Heart right ventricle (tissue), 16 donors: ENCODE measurements at regions of chr7 and their contacts with region 1.

Region 1: GRCh38 chr7:149090397-149091195 is at the start of gene ZNF786:
- DNase-seq: peak; percentile 90 to 92
- ATAC-seq: peak; percentile 96 to 99 (median 98)
- H3K4me3 ChIP-seq: peak within 1 kb of the TSS; percentile 57 to 99 (median 85)
- H3K27ac ChIP-seq: peak within 1 kb of the TSS; percentile 96 to 100 (median 98)
- H3K4me1 ChIP-seq: peaks cover 0 to 39% (median 14%) of the 10 kb centered on the region in 9 donors
- H3K27me3 ChIP-seq: no peaks in the 10 kb centered on the region
- CTCF ChIP-seq: peak; percentile 88 to 98 (median 96)
- total RNA-seq, gene ZNF786: 2.0 to 3.4 (median 2.6) TPM

Region 2: DNA sequence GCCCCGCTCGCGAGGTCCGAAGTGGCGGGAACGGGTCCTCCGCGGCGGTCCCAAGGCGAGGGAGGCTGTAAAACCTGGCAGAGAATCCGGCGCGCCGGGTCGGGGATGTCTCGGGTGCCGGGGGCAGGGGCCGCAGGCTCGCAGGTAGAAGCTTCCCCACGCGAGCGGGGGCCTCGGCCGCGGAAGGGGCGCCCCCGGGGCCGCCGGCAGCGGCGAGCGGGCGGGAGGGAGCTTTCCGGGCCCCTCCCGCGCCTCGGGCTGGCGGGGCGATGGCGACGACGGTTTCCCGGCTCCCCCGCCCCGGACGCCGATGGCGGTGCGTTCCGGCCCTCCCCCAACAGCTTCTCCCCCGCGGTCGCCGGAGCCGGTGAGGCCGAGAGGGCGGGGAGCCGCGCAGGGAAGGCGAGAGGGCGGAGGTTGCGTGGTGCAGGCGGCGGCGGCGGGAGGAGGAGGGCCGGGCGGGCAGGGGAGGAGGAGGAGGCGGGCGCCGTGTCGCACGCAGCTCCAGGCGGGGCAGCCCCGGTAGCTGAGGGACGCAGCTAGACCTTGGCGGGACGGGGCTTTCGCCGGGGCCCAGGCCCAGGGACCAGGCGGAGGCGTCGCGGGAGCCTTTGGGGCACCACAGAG is 392.1 kb before region 1 on chr7 and contains the start of gene CUL1:
- intact Hi-C with region 1: loop called in 1 of 10 experiments (anchors 5 kb)
- DNase-seq: peak; percentile 89 to 92
- ATAC-seq: peak; percentile 86 to 94 (median 90)
- H3K4me3 ChIP-seq: peak within 1 kb of the TSS; percentile 50 to 97 (median 93)
- H3K27ac ChIP-seq: peak within 1 kb of the TSS; percentile 89 to 100 (median 96)
- H3K4me1 ChIP-seq: peaks cover 10 to 53% (median 45%) of the 10 kb centered on the region in 9 donors
- H3K27me3 ChIP-seq: no peaks in the 10 kb centered on the region
- CTCF ChIP-seq: no peak
- total RNA-seq, gene CUL1: 40.6 to 53.4 (median 45.0) TPM

Region 3: GRCh38 chr7:148884299-148885022 is 206.1 kb before region 1 on chr7:
- intact Hi-C with region 1: loop called in 1 of 10 experiments (anchors 5 kb)
- DNase-seq: peak; percentile 93 to 94
- ATAC-seq: peak; percentile 99 to 100 (median 100)
- H3K4me3 ChIP-seq: peak overlapping the region; percentile 50 to 97 (median 94)
- H3K27ac ChIP-seq: peak overlapping the region; percentile 73 to 96 (median 93)
- H3K4me1 ChIP-seq: peaks cover 0 to 19% (median 8%) of the 10 kb centered on the region in 9 donors
- H3K27me3 ChIP-seq: no peaks in the 10 kb centered on the region
- CTCF ChIP-seq: peak in 1 of 9 donors; percentile 20

Region 4: GRCh38 chr7:148927123-148928045 is 163.2 kb before region 1 on chr7:
- intact Hi-C with region 1: no loop called
- DNase-seq: no peak
- ATAC-seq: no peak
- H3K4me3 ChIP-seq: no peak overlapping the region
- H3K27ac ChIP-seq: no peak overlapping the region
- H3K4me1 ChIP-seq: no peaks in the 10 kb centered on the region
- H3K27me3 ChIP-seq: no peaks in the 10 kb centered on the region
- CTCF ChIP-seq: no peak

Region 5: GRCh38 chr7:149005241-149006050 is 85.2 kb before region 1 on chr7:
- intact Hi-C with region 1: loop called in 9 of 10 experiments (anchors 1 to 5 kb)
- DNase-seq: peak; percentile 85
- ATAC-seq: peak; percentile 77 to 94 (median 82)
- H3K4me3 ChIP-seq: no peak overlapping the region
- H3K27ac ChIP-seq: no peak overlapping the region
- H3K4me1 ChIP-seq: peaks cover 0 to 4% (median 0%) of the 10 kb centered on the region in 9 donors
- H3K27me3 ChIP-seq: no peaks in the 10 kb centered on the region
- CTCF ChIP-seq: peak; percentile 82 to 95 (median 89)

Region 6: DNA sequence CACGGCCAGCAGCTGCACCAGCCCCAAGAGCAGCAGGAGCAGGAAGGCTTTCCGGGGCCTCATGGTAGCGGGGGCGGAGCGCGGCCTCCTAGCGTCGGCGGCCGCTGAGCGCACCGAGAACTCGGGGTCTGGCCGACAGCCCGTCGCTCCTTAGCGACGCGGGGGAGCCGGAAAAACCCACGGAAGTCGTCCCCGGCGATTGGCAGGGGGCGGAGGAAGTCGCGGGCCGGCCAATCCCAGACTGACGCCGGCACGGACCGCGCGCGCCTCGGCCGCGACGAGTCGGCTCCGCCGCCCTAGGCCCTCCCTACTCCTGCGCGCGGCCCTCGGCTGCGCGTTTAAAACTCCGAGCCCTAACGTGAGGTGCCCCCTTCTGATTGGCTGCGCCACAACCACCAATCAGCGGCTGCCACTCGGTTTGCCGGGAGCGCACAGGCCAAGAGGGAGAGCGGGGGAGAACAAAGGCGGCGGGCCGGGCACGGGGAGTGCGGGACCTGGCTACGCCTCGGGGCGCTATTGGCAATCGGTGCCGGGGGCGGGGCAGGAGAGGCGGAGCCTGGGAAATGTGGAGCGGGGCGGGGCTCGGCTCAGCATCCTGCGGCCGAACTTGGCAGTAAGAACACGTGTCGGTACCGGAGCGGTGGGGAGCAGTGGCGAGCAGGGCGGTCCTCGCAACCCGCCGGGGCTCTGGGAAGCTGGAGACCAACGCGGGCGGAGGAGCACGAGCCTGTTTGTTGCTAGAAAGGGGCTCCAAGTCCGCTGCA is 62.1 kb before region 1 on chr7 and contains the start of gene PDIA4:
- intact Hi-C with region 1: loop called in 3 of 10 experiments (anchors 1 kb)
- DNase-seq: peak; percentile 99 to 100
- ATAC-seq: peak; percentile 95 to 99 (median 98)
- H3K4me3 ChIP-seq: peak within 1 kb of the TSS; percentile 63 to 92 (median 84)
- H3K27ac ChIP-seq: peak within 1 kb of the TSS; percentile 44 to 95 (median 88)
- H3K4me1 ChIP-seq: peaks cover 0 to 35% (median 22%) of the 10 kb centered on the region in 9 donors
- H3K27me3 ChIP-seq: no peaks in the 10 kb centered on the region
- CTCF ChIP-seq: peak in 6 of 9 donors; percentile 8 to 49 (median 33)
- total RNA-seq, gene PDIA4: 18.2 to 49.2 (median 24.6) TPM

Region 7: GRCh38 chr7:149067876-149068275 is 22.7 kb before region 1 on chr7:
- intact Hi-C with region 1: loop called in 1 of 10 experiments (anchors 2 kb)
- DNase-seq: no peak
- ATAC-seq: no peak
- H3K4me3 ChIP-seq: no peak overlapping the region
- H3K27ac ChIP-seq: no peak overlapping the region
- H3K4me1 ChIP-seq: peaks cover 0 to 20% (median 0%) of the 10 kb centered on the region in 9 donors
- H3K27me3 ChIP-seq: no peaks in the 10 kb centered on the region
- CTCF ChIP-seq: no peak

Region 8: GRCh38 chr7:149125863-149126661 is 35.5 kb after region 1 on chr7 and contains the start of gene ZNF425:
- intact Hi-C with region 1: loop called in 3 of 10 experiments (anchors 1 to 2 kb)
- DNase-seq: peak; percentile 90 to 95
- ATAC-seq: peak; percentile 93 to 98 (median 96)
- H3K4me3 ChIP-seq: peak within 1 kb of the TSS; percentile 76 to 100 (median 94)
- H3K27ac ChIP-seq: peak within 1 kb of the TSS; percentile 77 to 98 (median 95)
- H3K4me1 ChIP-seq: peaks cover 6 to 22% (median 18%) of the 10 kb centered on the region in 9 donors
- H3K27me3 ChIP-seq: no peaks in the 10 kb centered on the region
- CTCF ChIP-seq: peak; percentile 85 to 99 (median 96)
- total RNA-seq, gene ZNF425: 0.28 to 1.2 (median 0.78) TPM

Region 9: GRCh38 chr7:149245744-149246143 is 155.1 kb after region 1 on chr7:
- intact Hi-C with region 1: no loop called
- DNase-seq: no peak
- ATAC-seq: no peak
- H3K4me3 ChIP-seq: no peak overlapping the region
- H3K27ac ChIP-seq: no peak overlapping the region
- H3K4me1 ChIP-seq: peaks cover 3 to 12% (median 7%) of the 10 kb centered on the region in 9 donors
- H3K27me3 ChIP-seq: no peaks in the 10 kb centered on the region
- CTCF ChIP-seq: no peak